ENCODE measurements at regions of chr16 and their contacts with region 1.

Region 1: DNA sequence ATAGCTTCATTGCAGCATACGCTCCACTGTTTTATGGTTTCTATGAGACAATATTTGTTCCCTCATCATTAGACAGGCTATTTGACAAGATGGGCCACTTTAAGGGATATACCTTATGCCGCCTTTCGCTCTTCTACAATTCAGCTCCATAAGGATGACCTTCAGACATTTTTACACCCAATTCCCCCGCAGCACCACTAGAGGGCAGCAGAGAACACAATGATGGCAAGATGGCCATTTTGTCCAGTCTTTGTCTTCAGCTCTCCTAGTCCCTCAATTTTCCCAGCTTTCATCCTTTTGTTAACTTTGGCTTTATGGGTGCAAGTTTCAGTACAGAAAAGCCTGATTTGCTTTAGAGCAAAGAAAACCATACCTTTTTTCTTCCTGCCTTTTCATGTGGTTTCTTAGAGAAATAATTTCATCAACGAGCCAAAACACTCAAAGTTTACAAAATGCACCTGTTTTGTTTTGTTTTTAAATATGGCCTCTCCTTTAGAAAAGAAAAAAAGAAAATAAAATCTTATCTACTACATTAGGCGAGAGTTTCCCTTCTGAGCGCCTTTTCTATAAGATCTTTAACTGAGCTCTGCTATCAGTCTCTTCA is 355.3 kb downstream of the TOX3 start:
- DNase-seq: peak; percentile 46
- CTCF ChIP-seq: peak; percentile 91

Region 2: DNA sequence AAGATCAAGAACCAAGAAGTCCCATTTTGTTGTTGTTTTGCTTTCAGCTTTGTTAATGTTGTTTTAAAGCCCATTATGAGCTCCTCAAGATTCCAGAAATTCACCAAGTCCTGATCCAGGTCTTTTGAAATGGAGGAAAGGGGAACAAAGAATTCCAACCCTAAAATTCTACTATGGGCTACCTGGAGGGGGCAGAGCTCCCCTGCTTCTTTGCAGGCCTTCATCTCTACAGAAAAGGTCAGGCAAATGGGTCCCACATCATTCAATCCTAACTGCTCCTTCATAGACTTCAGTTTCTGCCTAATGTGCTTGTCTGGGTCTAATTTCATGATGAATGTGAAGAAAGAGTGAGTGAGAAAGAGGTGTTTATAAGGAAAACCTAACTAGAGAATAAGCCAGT is 20.2 kb before region 1 on chr16:
- CTCF ChIA-PET with region 1: interaction called, 19 read pairs
- POLR2A ChIA-PET with region 1: no interaction called
- DNase-seq: no peak
- CTCF ChIP-seq: no peak

Region 3: DNA sequence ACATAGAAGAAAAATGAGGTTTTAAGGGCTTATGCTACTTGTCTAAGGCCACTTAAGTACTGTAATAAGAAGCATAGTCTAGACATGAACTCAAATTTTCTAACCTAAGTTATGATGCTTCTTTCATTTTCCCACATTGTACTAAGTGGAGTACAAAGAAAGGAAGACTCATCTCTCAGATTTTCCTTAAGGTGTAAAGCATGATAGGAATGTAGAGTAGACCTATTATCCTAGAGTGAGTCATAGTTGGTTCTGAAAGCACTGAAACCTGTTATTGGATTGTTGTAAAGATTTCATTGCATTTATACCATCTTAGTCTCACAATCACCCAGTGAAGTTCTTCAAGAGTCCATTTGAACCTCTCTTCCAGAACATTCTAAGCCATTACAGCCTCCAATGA is 11.5 kb after region 1 on chr16:
- CTCF ChIA-PET with region 1: interaction called, 34 read pairs
- POLR2A ChIA-PET with region 1: no interaction called
- DNase-seq: no peak
- CTCF ChIP-seq: no peak

Region 4: GRCh38 chr16:52212841-52213240 is 21.2 kb after region 1 on chr16:
- CTCF ChIA-PET with region 1: interaction called, 11 read pairs
- POLR2A ChIA-PET with region 1: no interaction called
- DNase-seq: no peak
- CTCF ChIP-seq: no peak

Region 5: GRCh38 chr16:52912565-52913173 is 721.0 kb after region 1 on chr16:
- CTCF ChIA-PET with region 1: interaction called, 67 read pairs
- POLR2A ChIA-PET with region 1: no interaction called
- DNase-seq: peak; percentile 45
- CTCF ChIP-seq: peak; percentile 80